CD8-positive, alpha-beta T cell (primary cell): ENCODE measurements at regions of chr1 and their contacts with region 1.

Region 1: DNA sequence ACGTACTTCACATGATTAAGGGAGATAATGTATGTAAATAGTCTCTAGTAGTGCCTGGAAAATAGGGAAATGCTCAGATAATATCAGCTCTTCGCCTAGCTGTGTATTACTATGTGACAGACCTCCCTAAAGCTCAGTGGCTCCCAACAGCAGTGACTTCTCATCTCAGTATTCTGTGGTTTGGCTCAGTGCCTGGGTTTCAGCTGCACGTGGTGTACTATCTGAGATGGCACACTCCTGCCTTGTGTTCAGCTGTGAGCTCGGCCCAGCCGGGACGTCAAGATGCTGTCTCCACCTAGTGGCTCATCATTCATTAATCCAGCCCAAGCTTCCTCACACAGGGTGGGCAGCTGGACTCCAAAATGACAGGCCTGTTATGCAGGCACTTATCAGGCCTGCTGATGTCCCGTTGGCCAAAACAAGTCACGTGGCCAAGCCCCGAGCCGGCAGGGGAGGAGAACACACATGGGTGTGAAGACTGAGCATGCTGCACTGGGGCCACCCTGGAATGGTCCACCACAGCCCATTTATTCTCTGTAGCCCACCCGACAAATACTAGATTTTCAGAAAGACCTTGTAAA is 17.8 kb downstream of the SLFNL1 start:
- DNase-seq: peak; percentile 71 to 94 (median 90)
- ATAC-seq: peak; percentile 98
- H3K4me3 ChIP-seq: no peak overlapping the region
- H3K4me3 Mint-ChIP-seq: no peak overlapping the region
- H3K27ac ChIP-seq: peak overlapping the region in 1 of 2 experiments; percentile 51
- H3K27ac Mint-ChIP-seq: peak overlapping the region; percentile 23
- H3K4me1 ChIP-seq: peaks cover 15% of the 10 kb centered on the region
- H3K4me1 Mint-ChIP-seq: peaks cover 20% of the 10 kb centered on the region
- H3K27me3 ChIP-seq: no peaks in the 10 kb centered on the region
- H3K27me3 Mint-ChIP-seq: no peaks in the 10 kb centered on the region
- CTCF ChIP-seq: peak; percentile 33

Region 2: GRCh38 chr1:40979233-40980067 is 24.3 kb before region 1 on chr1 and contains the start of gene CTPS1:
- CTCF ChIA-PET with region 1: interaction called, 17 read pairs
- POLR2A ChIA-PET with region 1: interaction called, 23 read pairs
- intact Hi-C with region 1: loop called (anchors 1 kb)
- DNase-seq: peak; percentile 92 to 98 (median 95)
- ATAC-seq: peak; percentile 81
- H3K4me3 ChIP-seq: peak within 1 kb of the TSS; percentile 83 to 91
- H3K4me3 Mint-ChIP-seq: peak within 1 kb of the TSS; percentile 95
- H3K27ac ChIP-seq: peak within 1 kb of the TSS; percentile 85 to 95
- H3K27ac Mint-ChIP-seq: peak within 1 kb of the TSS; percentile 97
- H3K4me1 ChIP-seq: peaks cover 16% of the 10 kb centered on the region
- H3K4me1 Mint-ChIP-seq: peaks cover 35% of the 10 kb centered on the region
- H3K27me3 ChIP-seq: no peaks in the 10 kb centered on the region
- H3K27me3 Mint-ChIP-seq: no peaks in the 10 kb centered on the region
- CTCF ChIP-seq: no peak
- total RNA-seq, gene CTPS1: 68.5 to 69.0 TPM

Region 3: GRCh38 chr1:41222496-41222895 is 218.8 kb after region 1 on chr1:
- CTCF ChIA-PET with region 1: no interaction called
- POLR2A ChIA-PET with region 1: no interaction called
- intact Hi-C with region 1: no loop called
- DNase-seq: no peak
- ATAC-seq: no peak
- H3K4me3 ChIP-seq: no peak overlapping the region
- H3K4me3 Mint-ChIP-seq: no peak overlapping the region
- H3K27ac ChIP-seq: no peak overlapping the region
- H3K27ac Mint-ChIP-seq: no peak overlapping the region
- H3K4me1 ChIP-seq: no peaks in the 10 kb centered on the region
- H3K4me1 Mint-ChIP-seq: peaks cover 20% of the 10 kb centered on the region
- H3K27me3 ChIP-seq: no peaks in the 10 kb centered on the region
- H3K27me3 Mint-ChIP-seq: no peaks in the 10 kb centered on the region
- CTCF ChIP-seq: no peak